Head of caudate nucleus (tissue), 42 donors: ENCODE measurements at regions of chr6 and their contacts with region 1.

Region 1: DNA sequence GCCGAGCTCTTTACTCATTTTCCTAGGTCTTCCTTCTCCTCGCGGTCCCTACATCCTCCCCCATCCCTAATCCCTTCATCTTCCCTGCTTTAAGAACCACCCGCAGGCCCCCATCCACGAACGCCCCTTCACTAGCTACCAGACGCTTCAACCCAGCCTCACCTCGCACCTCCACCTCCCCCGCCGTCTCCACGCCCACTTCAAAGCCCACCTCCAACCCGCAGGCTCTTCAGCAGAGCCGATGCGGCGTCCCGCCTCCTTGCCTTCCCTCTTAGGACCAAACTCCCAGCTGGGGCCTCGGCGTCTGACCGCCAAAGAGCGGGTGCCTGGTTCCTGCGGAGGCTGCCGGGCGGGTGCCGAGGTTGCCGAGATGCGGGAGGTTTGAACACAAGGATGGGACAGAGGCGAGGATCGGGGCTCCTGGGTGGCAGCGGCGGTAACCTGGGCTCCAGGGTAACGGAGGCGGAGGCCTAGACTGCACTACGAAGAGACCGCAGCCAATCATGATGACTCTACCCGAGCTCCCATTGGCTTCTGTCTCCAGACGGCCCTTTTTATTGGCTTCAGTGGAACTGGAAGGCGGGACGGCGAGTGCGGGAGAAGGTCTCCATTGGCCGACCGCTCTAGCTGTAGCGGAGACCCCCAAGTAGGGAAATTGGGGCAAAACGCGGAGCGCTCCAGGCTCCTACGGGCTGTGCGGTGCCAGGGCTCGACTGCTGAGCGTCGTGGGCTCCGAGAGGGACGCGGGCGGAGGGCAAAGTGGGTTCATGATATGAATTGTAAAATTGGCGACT is at the start of gene LCA5:
- DNase-seq: peak; percentile 89 to 99 (median 97)

Region 2: GRCh38 chr6:79078075-79079025 is 458.8 kb before region 1 on chr6 and contains the start of gene PHIP:
- intact Hi-C with region 1: loop called (anchors 5 kb)
- DNase-seq: peak; percentile 82 to 97 (median 93)

Region 3: GRCh38 chr6:79158856-79159516 is 378.2 kb before region 1 on chr6:
- intact Hi-C with region 1: no loop called
- DNase-seq: no peak